CD4-positive, alpha-beta memory T cell (primary cell): ENCODE measurements at regions of chr1 and their contacts with region 1.

Region 1: GRCh38 chr1:182781841-182782586 is 7.6 kb upstream of the NPL start:
- DNase-seq: peak; percentile 53 to 64 (median 59)
- H3K4me3 ChIP-seq: no peak overlapping the region
- H3K4me3 Mint-ChIP-seq: no peak overlapping the region
- H3K27ac ChIP-seq: no peak overlapping the region
- H3K27ac Mint-ChIP-seq: peak overlapping the region in 1 of 7 donors; percentile 40
- H3K4me1 ChIP-seq: no peaks in the 10 kb centered on the region
- H3K4me1 Mint-ChIP-seq: peaks cover 3 to 6% (median 4%) of the 10 kb centered on the region in 4 donors
- H3K27me3 ChIP-seq: no peaks in the 10 kb centered on the region
- H3K27me3 Mint-ChIP-seq: no peaks in the 10 kb centered on the region

Region 2: DNA sequence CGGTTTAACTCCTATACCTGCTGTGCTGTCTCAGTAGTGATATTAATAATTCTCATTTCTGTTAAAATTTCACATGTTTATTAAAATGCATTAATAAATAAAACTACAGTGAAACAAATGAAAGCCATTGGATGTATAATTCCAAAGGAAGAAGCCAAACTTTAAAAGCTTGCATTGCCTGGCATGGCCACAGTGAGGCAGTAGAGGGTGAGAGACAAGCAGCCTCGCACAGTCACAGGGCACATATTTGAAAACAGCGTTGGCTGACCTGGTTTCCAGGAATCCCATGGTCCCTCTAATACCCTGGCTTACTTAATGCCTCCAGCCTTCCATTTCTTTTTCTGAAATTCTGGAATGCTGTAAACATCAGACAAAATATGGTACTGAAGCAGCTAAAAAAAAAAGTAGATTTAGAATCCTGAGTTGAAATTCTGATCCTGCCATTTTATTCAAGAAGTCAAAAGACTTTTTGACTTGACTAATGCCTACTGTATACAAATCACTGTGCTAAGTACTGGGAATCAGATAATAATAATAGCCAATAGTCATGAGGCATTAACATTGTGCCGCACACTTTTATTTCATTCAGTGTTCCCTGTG is 186.3 kb before region 1 on chr1:
- CTCF ChIA-PET with region 1: interaction called, 707 read pairs
- POLR2A ChIA-PET with region 1: interaction called, 15 read pairs
- intact Hi-C with region 1: no loop called
- DNase-seq: peak; percentile 52 to 64 (median 53)
- H3K4me3 ChIP-seq: no peak overlapping the region
- H3K4me3 Mint-ChIP-seq: no peak overlapping the region
- H3K27ac ChIP-seq: no peak overlapping the region
- H3K27ac Mint-ChIP-seq: peak overlapping the region in 2 of 7 donors; percentile 22 to 36
- H3K4me1 ChIP-seq: no peaks in the 10 kb centered on the region
- H3K4me1 Mint-ChIP-seq: peaks cover 0 to 2% (median under 1%) of the 10 kb centered on the region in 4 donors
- H3K27me3 ChIP-seq: no peaks in the 10 kb centered on the region
- H3K27me3 Mint-ChIP-seq: no peaks in the 10 kb centered on the region

Region 3: GRCh38 chr1:182614796-182615454 is 167.1 kb before region 1 on chr1:
- CTCF ChIA-PET with region 1: interaction called, 10 read pairs
- POLR2A ChIA-PET with region 1: interaction called, 7 read pairs
- intact Hi-C with region 1: loop called (anchors 5 kb)
- DNase-seq: peak in 4 of 5 donors; percentile 33 to 60 (median 34)
- H3K4me3 ChIP-seq: peak overlapping the region; percentile 46 to 73
- H3K4me3 Mint-ChIP-seq: peak overlapping the region; percentile 79 to 90 (median 86)
- H3K27ac ChIP-seq: peak overlapping the region; percentile 0
- H3K27ac Mint-ChIP-seq: peak overlapping the region; percentile 76 to 96 (median 95)
- H3K4me1 ChIP-seq: peaks cover 41% of the 10 kb centered on the region
- H3K4me1 Mint-ChIP-seq: peaks cover 30 to 47% (median 33%) of the 10 kb centered on the region in 4 donors
- H3K27me3 ChIP-seq: no peaks in the 10 kb centered on the region
- H3K27me3 Mint-ChIP-seq: peaks cover 2 to 15% of the 10 kb centered on the region in 2 donors

Region 4: GRCh38 chr1:182795563-182796228 is 13.7 kb after region 1 on chr1:
- CTCF ChIA-PET with region 1: interaction called, 10 read pairs
- POLR2A ChIA-PET with region 1: no interaction called
- intact Hi-C with region 1: no loop called
- DNase-seq: no peak
- H3K4me3 ChIP-seq: no peak overlapping the region
- H3K4me3 Mint-ChIP-seq: no peak overlapping the region
- H3K27ac ChIP-seq: no peak overlapping the region
- H3K27ac Mint-ChIP-seq: no peak overlapping the region
- H3K4me1 ChIP-seq: no peaks in the 10 kb centered on the region
- H3K4me1 Mint-ChIP-seq: peaks cover 0 to 4% (median 1%) of the 10 kb centered on the region in 4 donors
- H3K27me3 ChIP-seq: no peaks in the 10 kb centered on the region
- H3K27me3 Mint-ChIP-seq: no peaks in the 10 kb centered on the region